GM13976 (cell line): ENCODE measurements at regions of chr22 and their contacts with region 1.

Region 1: DNA sequence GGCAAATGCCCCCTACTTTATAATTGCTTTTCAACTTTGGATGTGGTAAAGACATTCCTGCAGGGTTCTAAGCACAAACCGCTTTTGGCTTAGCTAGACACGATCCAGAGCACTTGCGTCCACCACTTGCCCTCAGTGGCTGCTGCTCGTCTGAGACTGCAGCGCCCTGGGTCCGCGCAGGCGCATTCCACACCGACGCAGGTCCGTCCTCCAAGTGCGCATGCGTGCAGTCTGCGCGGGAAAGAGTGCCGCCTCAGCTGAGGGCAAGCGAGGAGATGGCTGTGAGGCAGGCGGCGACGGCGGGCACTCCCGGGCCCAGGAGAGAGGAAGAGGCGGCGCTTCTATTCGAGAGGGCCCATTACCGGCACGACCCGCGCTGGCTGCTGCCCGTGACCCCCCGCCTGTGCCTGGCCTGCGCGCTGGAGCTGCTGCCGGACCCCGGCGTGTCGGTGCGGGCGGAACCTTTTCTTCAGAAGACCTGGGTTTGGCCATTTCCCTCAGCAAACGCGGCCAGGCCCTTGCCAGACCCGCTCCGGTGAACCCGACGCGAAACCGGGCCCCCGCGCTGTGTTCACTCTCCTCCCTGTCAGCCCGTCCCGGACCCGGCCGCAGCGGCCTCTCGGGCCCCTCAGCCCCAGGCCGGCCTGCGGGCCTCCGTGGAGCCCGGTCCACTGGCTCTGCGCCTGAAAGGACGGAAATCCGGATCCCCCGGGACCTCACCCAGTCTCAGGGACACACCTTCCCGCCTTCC is at the start of gene MEI1:
- DNase-seq: peak; percentile 93
- CTCF ChIP-seq: no peak

Region 2: DNA sequence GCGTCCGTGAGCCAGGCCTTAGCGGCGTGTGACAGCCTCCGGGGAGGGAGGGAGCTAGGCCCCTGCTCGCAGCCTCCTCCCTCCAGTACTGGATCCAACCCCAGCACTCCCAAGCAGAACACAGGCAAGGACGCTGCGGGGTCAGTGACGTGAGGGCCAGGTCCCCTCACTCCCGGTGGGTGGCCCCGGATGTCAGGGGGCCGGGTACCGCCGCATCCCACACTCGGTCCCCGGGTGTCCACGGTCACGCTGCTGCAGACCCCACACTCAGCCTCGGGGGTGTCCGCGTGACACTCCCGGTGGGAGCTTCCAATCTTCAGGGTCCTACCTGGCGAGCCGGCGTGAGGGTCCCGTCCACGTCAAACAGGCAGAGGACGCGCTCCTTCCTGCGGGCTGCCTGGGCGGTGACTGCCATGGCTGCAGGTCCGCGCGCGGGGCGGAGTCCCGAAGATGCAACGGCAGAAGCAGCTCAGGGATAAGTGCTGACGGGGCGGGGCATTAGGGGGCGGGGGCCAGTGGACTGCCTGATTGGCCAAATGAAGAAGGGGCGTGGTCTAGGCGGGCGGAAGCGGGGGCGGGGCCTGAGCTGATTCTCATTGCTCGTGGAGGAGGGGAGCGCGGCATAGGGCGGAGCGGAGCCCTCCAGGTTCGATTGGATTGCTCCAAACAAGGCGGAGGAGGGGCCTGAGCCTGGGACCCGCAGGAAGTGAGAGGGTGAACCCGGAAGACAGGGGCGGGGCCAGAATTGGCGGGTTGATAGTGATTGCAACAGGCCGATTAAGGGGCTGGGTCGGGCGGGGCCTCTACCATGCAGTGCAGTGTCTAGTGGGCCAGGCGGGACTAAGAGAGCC is 109.8 kb before region 1 on chr22 and contains the start of gene PMM1:
- in situ Hi-C with region 1: no loop called
- DNase-seq: peak; percentile 100
- CTCF ChIP-seq: no peak

Region 3: DNA sequence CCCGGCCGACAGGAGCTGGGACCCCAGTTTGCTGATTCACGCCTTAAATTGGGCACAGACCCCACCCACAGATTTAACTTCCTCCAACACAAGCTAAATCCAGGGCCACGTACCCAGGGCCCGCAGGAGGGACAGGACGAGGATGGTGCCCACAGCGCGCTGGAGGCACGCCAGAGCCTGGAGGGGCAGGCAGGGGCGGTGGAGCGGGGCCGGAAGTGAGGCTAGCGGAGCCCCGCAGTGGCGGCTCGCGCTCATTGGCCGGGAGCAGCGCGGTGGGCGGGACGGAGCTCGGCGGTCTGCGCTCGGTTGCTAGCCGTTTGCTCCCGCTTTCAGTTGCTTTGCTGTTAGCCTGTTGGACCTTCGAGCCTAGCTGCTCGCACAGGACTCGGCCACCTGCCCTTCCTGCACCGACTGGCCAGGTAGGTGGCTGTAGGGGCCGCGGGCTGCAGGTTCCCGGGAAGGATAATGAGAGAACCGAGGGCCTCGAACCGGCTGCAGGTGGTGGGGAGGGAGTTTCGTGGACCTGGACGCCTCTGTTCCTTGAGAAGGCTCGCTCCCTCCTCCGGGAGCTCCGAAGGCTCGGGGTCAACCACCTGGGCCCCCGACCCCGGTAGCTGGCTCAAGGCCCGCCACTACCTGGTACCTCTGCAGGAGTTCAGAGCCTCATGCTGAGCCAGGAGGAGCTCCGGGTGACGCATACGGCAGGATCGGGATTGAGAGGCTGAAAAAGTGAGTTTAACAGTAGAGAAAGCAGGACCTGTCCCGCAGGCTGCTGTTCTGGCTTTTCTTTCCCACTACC is 101.1 kb after region 1 on chr22 and contains the start of gene CCDC134:
- in situ Hi-C with region 1: no loop called
- DNase-seq: peak; percentile 98
- CTCF ChIP-seq: no peak

Region 4: DNA sequence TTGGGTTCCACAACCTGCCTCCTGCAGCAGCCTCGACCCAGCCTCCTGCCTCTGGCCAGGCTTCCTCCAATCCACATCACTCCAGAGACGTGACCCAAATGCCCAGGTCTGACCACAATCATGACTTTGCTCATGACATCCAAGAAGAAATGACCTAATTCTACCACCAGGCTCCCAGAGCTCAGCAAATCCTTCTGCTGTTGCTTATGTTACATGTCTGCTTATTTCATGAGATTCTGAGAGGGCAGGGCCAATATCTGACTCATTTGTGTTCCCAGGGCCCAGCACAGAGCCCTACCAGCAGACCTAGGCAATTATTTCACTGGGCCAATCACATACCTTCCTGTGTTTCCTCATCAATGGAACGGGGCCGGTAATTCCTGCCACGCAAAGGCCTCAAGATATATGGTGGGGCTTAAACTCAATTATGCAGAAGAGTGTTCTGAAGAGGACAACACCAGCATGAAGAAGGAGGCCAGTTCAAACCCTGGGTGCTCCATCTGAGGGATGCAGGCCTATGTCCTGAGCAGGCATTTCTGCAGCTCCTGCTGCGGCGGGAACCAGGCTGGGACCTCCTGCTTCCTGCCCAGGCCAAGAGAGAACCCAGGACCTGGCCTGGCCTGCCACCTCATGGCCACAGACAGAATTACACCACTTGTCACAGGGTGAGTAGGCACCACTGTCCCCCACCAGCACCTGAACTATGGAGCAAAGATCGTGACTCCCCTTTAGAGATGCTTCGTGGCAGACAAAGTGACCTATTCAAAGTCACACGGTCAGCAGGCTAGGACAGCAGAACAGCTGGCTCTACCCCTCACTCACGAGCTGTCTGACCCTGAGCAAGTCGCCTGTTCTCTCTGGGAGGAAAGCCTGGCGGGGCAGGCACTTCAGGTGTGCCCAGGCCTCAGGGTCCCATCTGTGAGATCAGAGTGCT is 241.7 kb after region 1 on chr22:
- in situ Hi-C with region 1: loop called (anchors 5 kb)
- DNase-seq: peak; percentile 81
- CTCF ChIP-seq: peak; percentile 95